Pancreas (tissue), 10 donors: ENCODE measurements at regions of chr11 and their contacts with region 1.

Region 1: DNA sequence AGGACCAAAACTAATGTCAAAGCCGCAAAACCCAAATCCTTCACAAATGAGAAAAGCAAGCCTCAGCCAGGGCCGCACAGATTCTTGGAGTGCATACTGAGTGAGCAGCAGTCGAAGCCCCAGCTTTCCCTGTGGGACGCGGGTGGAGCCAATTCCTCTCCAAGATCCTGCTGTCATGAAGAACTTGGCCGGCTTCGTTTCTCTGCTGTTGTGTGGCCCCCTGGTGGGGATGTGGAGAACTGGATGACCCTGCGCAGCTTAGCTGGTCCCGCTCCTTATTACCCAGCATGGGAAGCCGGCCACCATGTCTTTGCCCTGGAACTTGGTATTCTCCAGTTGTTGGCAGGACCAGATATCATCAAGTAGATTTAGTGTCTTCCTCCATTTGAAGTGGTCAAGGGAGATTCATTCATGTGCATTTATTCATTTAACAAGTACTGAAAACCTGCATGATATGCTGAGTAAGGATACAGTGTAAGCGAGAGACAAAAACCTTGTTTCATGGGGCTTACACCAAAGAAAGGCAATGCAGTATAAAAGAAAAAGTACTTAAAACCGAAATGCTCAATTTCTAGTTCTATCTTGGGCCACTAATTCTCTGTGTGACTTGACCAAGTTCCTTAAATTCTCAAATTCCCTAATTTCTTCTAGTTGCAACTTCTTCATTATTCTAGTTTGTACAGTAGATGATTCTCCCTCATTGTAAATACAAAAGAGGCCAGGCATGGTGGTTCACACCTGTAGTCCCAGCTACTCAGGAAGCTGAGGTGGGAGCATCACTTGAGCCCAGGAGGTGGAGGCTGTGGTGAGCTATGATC is 56.7 kb upstream of the CRTAM start:
- DNase-seq: peak; percentile 68 to 90 (median 84)
- ATAC-seq: peak; percentile 95 to 99 (median 96)
- H3K4me3 ChIP-seq: no peak overlapping the region
- H3K27ac ChIP-seq: no peak overlapping the region
- H3K4me1 ChIP-seq: no peaks in the 10 kb centered on the region
- H3K27me3 ChIP-seq: no peaks in the 10 kb centered on the region
- CTCF ChIP-seq: peak; percentile 79 to 95 (median 86)

Region 2: GRCh38 chr11:122584670-122585069 is 196.9 kb before region 1 on chr11:
- intact Hi-C with region 1: loop called in 1 of 3 experiments (anchors 10 kb)
- DNase-seq: no peak
- ATAC-seq: no peak
- H3K4me3 ChIP-seq: no peak overlapping the region
- H3K27ac ChIP-seq: no peak overlapping the region
- H3K4me1 ChIP-seq: no peaks in the 10 kb centered on the region
- H3K27me3 ChIP-seq: no peaks in the 10 kb centered on the region
- CTCF ChIP-seq: no peak

Region 3: GRCh38 chr11:122628810-122629555 is 152.6 kb before region 1 on chr11:
- intact Hi-C with region 1: loop called in 2 of 3 experiments (anchors 5 to 10 kb)
- DNase-seq: peak in 5 of 6 donors; percentile 41 to 79 (median 51)
- ATAC-seq: peak; percentile 25 to 86 (median 78)
- H3K4me3 ChIP-seq: no peak overlapping the region
- H3K27ac ChIP-seq: no peak overlapping the region
- H3K4me1 ChIP-seq: no peaks in the 10 kb centered on the region
- H3K27me3 ChIP-seq: no peaks in the 10 kb centered on the region
- CTCF ChIP-seq: peak; percentile 47 to 65 (median 60)

Region 4: DNA sequence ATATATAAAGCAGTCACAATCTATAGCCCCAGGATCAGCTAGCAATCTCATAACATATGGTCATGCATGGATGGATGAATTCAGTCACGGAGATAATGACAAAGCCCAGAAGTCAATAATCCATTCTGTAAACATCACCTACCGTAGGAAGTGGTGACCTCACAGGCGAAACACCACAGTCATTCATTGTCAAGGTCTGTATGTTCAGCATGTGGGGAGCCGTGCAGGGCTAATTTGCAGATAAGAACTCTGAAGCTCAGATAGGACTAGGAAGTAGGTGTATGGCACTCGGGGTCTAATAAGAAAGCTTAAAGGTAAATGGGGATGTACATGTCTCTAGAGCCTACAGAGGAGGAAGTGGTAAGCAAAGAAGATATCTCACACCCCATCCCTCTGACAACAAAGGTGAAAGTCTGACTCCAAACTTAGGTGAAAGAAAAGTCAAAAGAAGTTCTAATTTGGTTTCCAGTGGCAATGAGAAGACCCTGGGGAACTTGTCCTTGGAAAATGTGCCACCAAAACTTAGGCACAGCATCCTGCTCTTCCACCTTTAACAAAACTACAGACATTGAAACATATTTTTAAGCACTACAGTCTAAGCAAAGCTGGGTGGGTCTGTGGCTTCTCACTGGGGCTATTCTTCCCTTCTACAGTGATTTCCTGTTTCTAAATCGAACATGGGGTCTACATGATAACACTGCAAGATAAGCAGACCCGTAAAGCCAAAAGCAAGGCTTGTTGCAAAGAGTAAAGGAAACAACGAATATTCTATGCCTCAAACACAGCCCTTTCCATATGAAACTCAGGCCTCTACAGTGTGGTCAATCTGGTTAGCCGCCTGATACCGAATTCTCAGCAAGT is 61.9 kb after region 1 on chr11:
- intact Hi-C with region 1: no loop called
- DNase-seq: no peak
- ATAC-seq: peak in 1 of 4 donors; percentile 32
- H3K4me3 ChIP-seq: no peak overlapping the region
- H3K27ac ChIP-seq: no peak overlapping the region
- H3K4me1 ChIP-seq: no peaks in the 10 kb centered on the region
- H3K27me3 ChIP-seq: peaks cover 0 to 2% (median 0%) of the 10 kb centered on the region in 4 donors
- CTCF ChIP-seq: no peak